Panc1 (cell line): ENCODE measurements at regions of chr17 and their contacts with region 1.

Region 1: DNA sequence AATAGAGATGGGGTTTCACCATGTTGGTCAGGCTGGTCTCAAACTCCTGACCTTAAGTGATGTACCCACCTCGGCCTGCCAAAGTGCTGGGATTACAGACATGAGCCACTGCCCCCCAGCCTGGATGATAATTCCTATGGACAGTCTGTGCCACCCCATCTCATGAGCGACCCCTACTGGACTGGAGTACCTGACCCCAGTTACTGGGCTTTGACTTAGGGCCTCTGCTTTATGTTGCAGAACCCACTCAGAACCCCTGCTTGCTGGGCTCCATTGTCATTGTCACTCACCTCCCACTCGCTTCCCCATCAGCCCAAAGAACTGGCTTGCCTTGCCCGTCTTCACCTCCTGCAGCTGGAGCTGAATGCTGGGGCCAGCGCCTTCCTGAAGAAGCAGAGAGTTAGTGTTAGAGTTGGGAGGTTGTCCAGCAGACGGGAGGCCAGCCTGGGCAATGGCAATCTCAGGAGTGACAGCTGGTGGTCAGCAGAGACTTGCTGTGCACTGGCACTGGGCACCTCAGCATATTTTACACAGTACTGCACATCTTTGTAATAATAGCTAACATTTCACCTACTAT is 4.0 kb downstream of the TAC4 start:
- DNase-seq: no peak
- ATAC-seq: peak; percentile 63; the same call in 1 of the 2 replicates
- H3K4me3 ChIP-seq: no peak overlapping the region
- H3K27ac ChIP-seq: no peak overlapping the region
- H3K4me1 ChIP-seq: no peaks in the 10 kb centered on the region
- H3K27me3 ChIP-seq: no peaks in the 10 kb centered on the region
- CTCF ChIP-seq: peak; percentile 84

Region 2: GRCh38 chr17:49375544-49375943 is 468.3 kb before region 1 on chr17:
- CTCF ChIA-PET with region 1: interaction called, 14 read pairs
- POLR2A ChIA-PET with region 1: no interaction called
- in situ Hi-C with region 1: no loop called
- intact Hi-C with region 1: no loop called
- DNase-seq: no peak
- ATAC-seq: no peak
- H3K4me3 ChIP-seq: no peak overlapping the region
- H3K27ac ChIP-seq: no peak overlapping the region
- H3K4me1 ChIP-seq: no peaks in the 10 kb centered on the region
- H3K27me3 ChIP-seq: no peaks in the 10 kb centered on the region
- CTCF ChIP-seq: no peak

Region 3: GRCh38 chr17:49707608-49708514 is 136.0 kb before region 1 on chr17 and contains the start of gene SLC35B1:
- CTCF ChIA-PET with region 1: no interaction called
- POLR2A ChIA-PET with region 1: no interaction called
- in situ Hi-C with region 1: no loop called
- intact Hi-C with region 1: loop called (anchors 10 kb)
- DNase-seq: peak; percentile 98
- ATAC-seq: peak; percentile 99
- H3K4me3 ChIP-seq: peak within 1 kb of the TSS; percentile 83 to 93
- H3K27ac ChIP-seq: peak within 1 kb of the TSS; percentile 98
- H3K4me1 ChIP-seq: peaks cover 15% of the 10 kb centered on the region
- H3K27me3 ChIP-seq: no peaks in the 10 kb centered on the region
- CTCF ChIP-seq: peak; percentile 98
- total RNA-seq, gene SLC35B1: 84.6 TPM

Region 4: GRCh38 chr17:50129728-50130558 is 286.1 kb after region 1 on chr17 and contains the start of gene SAMD14:
- CTCF ChIA-PET with region 1: no interaction called
- POLR2A ChIA-PET with region 1: no interaction called
- in situ Hi-C with region 1: no loop called
- intact Hi-C with region 1: no loop called
- DNase-seq: no peak
- ATAC-seq: peak; percentile 48
- H3K4me3 ChIP-seq: peak within 1 kb of the TSS; percentile 45 to 56
- H3K27ac ChIP-seq: no peak within 1 kb of the TSS
- H3K4me1 ChIP-seq: peaks cover 26% of the 10 kb centered on the region
- H3K27me3 ChIP-seq: no peaks in the 10 kb centered on the region
- CTCF ChIP-seq: no peak
- total RNA-seq, gene SAMD14: 6.9 TPM